ENCODE measurements at regions of chr5 and their contacts with region 1.

Region 1: DNA sequence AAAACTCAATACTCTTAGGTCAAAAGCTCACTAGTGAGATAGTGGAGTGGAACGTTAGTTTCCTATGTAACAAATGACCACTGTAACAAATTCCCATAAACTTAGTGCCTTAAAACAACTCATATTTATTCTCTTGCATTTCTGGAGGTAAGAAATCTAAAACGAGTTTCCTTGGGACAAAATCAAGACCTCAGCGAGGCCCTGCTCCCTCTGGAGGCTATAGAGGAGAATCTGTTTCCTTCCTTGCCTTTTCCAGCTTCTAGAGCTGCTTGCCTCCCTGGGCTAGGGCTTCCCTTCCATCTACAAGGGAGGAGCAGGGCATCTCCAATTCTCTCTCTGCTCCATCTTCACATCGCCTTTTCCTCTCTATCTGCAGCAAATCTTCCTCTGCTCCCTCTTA is 32.0 kb downstream of the SEMA5A start:
- DNase-seq: no peak

Region 2: GRCh38 chr5:9381464-9381863 is 132.4 kb before region 1 on chr5:
- intact Hi-C with region 1: loop called (anchors 10 kb)
- DNase-seq: no peak

Measured in posterior cingulate gyrus (tissue), 11 donors.